ENCODE measurements at regions of chr3 and their contacts with region 1.

Region 1: GRCh38 chr3:127697551-127698240 is 24.9 kb downstream of the ABTB1 start:
- DNase-seq: peak; percentile 66 to 84
- ATAC-seq: peak; percentile 83 to 87
- H3K4me3 ChIP-seq: peak overlapping the region; percentile 47 to 70 (median 50)
- H3K27ac ChIP-seq: peak overlapping the region; percentile 88 to 96 (median 92)
- H3K4me1 ChIP-seq: peaks cover 61 to 71% of the 10 kb centered on the region in 2 donors
- H3K27me3 ChIP-seq: no peaks in the 10 kb centered on the region
- CTCF ChIP-seq: no peak
- POLR2A ChIP-seq: peak; percentile 5 to 50

Region 2: GRCh38 chr3:127574880-127575878 is 122.5 kb before region 1 on chr3:
- in situ Hi-C with region 1: no loop called
- intact Hi-C with region 1: loop called (anchors 1 kb)
- DNase-seq: peak; percentile 61 to 85
- ATAC-seq: peak; percentile 92 to 97
- H3K4me3 ChIP-seq: no peak overlapping the region
- H3K27ac ChIP-seq: no peak overlapping the region
- H3K4me1 ChIP-seq: peaks cover 0 to 6% of the 10 kb centered on the region in 2 donors
- H3K27me3 ChIP-seq: no peaks in the 10 kb centered on the region
- CTCF ChIP-seq: peak; percentile 94 to 98 (median 96)
- POLR2A ChIP-seq: no peak

Region 3: DNA sequence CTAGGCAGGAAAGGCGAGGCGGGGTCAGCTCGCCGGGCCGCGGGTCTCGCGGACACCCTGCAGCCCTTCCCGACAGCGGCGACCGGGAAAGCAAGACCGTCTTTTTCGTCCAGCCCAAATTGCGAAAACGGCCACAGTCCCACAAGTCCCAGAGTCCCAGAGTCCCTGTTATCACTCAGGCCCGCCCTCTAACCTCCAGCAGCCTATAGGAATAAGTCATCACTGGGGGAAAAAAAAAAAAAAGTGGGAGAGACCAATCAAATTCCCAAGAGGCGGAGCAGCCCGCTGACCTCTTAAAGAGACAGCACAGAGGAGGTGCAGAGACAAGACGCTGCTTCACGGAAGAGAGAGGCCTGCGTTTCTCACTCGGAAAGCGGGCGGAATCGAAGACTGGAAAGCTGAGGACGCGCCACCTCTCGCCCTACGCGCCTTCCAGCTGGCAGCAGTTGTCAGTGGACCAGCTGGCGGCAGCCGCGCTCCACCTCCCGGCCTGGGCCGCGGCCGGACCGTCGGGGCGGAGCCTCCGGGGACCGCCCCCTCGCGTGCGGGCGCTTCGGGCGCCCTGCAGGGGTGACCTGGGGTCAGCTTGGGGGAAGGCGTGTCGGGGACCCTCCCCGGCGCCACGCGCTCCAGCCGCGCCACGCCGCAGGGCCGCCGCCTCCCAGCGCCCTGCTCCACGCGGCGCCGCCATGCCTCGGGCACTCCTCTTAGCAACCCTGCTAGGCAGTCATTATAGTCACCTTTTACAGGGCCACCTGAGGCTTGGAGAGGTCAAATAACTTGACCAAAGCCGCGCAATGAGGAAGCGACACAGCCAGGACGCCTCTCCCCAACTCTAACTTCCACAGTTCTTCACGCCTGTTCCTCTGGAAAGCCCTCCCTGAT is 106.9 kb before region 1 on chr3 and contains the start of gene TPRA1:
- in situ Hi-C with region 1: no loop called
- intact Hi-C with region 1: loop called (anchors 2 kb)
- DNase-seq: peak; percentile 91 to 95
- ATAC-seq: peak; percentile 94 to 97
- H3K4me3 ChIP-seq: peak within 1 kb of the TSS; percentile 71 to 92 (median 76)
- H3K27ac ChIP-seq: peak within 1 kb of the TSS; percentile 88 to 96 (median 92)
- H3K4me1 ChIP-seq: peaks cover 26 to 32% of the 10 kb centered on the region in 2 donors
- H3K27me3 ChIP-seq: no peaks in the 10 kb centered on the region
- CTCF ChIP-seq: peak in 2 of 5 experiments; percentile 27 to 47
- POLR2A ChIP-seq: peak; percentile 56 to 78
- total RNA-seq, gene TPRA1: 29.2 to 42.1 (median 31.1) TPM

Region 4: DNA sequence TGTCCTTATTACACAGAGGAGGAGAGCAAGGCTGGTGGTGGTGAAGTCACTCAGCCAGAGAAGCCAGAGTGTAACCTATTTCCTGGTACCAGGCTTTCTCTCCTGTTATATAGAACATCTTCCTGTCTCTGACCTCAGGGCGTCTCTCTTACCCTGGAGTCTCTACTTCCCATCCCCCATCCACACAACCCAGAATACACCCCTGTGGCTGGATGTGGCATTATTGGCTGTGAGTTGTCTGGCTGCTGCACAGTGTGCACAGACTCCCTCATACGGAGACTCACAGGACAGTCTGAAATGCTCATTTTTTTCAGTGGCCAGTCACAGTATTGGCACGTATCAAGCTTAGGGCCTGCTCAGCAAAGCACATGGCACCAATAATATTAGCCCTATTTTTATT is 60.1 kb before region 1 on chr3:
- in situ Hi-C with region 1: no loop called
- intact Hi-C with region 1: no loop called
- DNase-seq: no peak
- ATAC-seq: no peak
- H3K4me3 ChIP-seq: no peak overlapping the region
- H3K27ac ChIP-seq: no peak overlapping the region
- H3K4me1 ChIP-seq: no peaks in the 10 kb centered on the region
- H3K27me3 ChIP-seq: no peaks in the 10 kb centered on the region
- CTCF ChIP-seq: no peak
- POLR2A ChIP-seq: no peak

Region 5: GRCh38 chr3:127652231-127652995 is 45.3 kb before region 1 on chr3:
- in situ Hi-C with region 1: no loop called
- intact Hi-C with region 1: loop called (anchors 1 kb)
- DNase-seq: no peak
- ATAC-seq: peak; percentile 78 to 89
- H3K4me3 ChIP-seq: no peak overlapping the region
- H3K27ac ChIP-seq: no peak overlapping the region
- H3K4me1 ChIP-seq: peaks cover 0 to 5% of the 10 kb centered on the region in 2 donors
- H3K27me3 ChIP-seq: no peaks in the 10 kb centered on the region
- CTCF ChIP-seq: peak; percentile 87 to 97 (median 90)
- POLR2A ChIP-seq: no peak

Region 6: GRCh38 chr3:127750226-127751031 is 52.7 kb after region 1 on chr3:
- in situ Hi-C with region 1: loop called in 1 of 4 experiments (anchors 5 kb)
- intact Hi-C with region 1: no loop called
- DNase-seq: peak in 1 of 2 donors; percentile 30
- ATAC-seq: peak; percentile 38 to 40
- H3K4me3 ChIP-seq: no peak overlapping the region
- H3K27ac ChIP-seq: peak overlapping the region; percentile 63 to 86 (median 76)
- H3K4me1 ChIP-seq: peaks cover 38 to 54% of the 10 kb centered on the region in 2 donors
- H3K27me3 ChIP-seq: no peaks in the 10 kb centered on the region
- CTCF ChIP-seq: no peak
- POLR2A ChIP-seq: no peak

Region 7: GRCh38 chr3:127762077-127762786 is 64.5 kb after region 1 on chr3:
- in situ Hi-C with region 1: no loop called
- intact Hi-C with region 1: loop called (anchors 5 kb)
- DNase-seq: peak in 1 of 2 donors; percentile 73
- ATAC-seq: peak; percentile 17 to 69
- H3K4me3 ChIP-seq: peak overlapping the region in 3 of 4 donors; percentile 24 to 39 (median 26)
- H3K27ac ChIP-seq: peak overlapping the region; percentile 73 to 78 (median 75)
- H3K4me1 ChIP-seq: peaks cover 42 to 52% of the 10 kb centered on the region in 2 donors
- H3K27me3 ChIP-seq: no peaks in the 10 kb centered on the region
- CTCF ChIP-seq: no peak
- POLR2A ChIP-seq: no peak

Region 8: GRCh38 chr3:127822698-127823425 is 125.2 kb after region 1 on chr3:
- in situ Hi-C with region 1: no loop called
- intact Hi-C with region 1: loop called (anchors 2 kb)
- DNase-seq: peak; percentile 48 to 69
- ATAC-seq: peak; percentile 65 to 75
- H3K4me3 ChIP-seq: peak overlapping the region; percentile 67 to 92 (median 85)
- H3K27ac ChIP-seq: peak overlapping the region; percentile 80 to 92 (median 84)
- H3K4me1 ChIP-seq: peaks cover 36 to 45% of the 10 kb centered on the region in 2 donors
- H3K27me3 ChIP-seq: no peaks in the 10 kb centered on the region
- CTCF ChIP-seq: peak in 1 of 5 experiments; percentile 25
- POLR2A ChIP-seq: peak; percentile 43 to 49

Measured in gastrocnemius medialis (tissue), 4 donors.